ENCODE measurements at regions of chr14 and their contacts with region 1.

Region 1: GRCh38 chr14:20461274-20462001 is at the start of gene PIP4P1:
- DNase-seq: peak; percentile 95 to 100 (median 99)
- ATAC-seq: peak; percentile 92
- H3K4me3 ChIP-seq: peak within 1 kb of the TSS; percentile 83
- H3K4me3 Mint-ChIP-seq: peak within 1 kb of the TSS; percentile 81 to 97 (median 92)
- H3K27ac ChIP-seq: peak within 1 kb of the TSS; percentile 96
- H3K27ac Mint-ChIP-seq: peak within 1 kb of the TSS; percentile 88 to 99 (median 92)
- H3K4me1 ChIP-seq: peaks cover 20 to 21% of the 10 kb centered on the region in 2 donors
- H3K4me1 Mint-ChIP-seq: peaks cover 18 to 36% (median 32%) of the 10 kb centered on the region in 7 donors
- H3K27me3 ChIP-seq: no peaks in the 10 kb centered on the region
- H3K27me3 Mint-ChIP-seq: peaks cover 0 to 2% (median 0%) of the 10 kb centered on the region in 5 donors
- total RNA-seq, gene PIP4P1: 34.9 to 87.1 (median 74.2) TPM

Region 2: GRCh38 chr14:20440882-20441281 is 20.6 kb before region 1 on chr14:
- CTCF ChIA-PET with region 1: interaction called, 3 read pairs
- POLR2A ChIA-PET with region 1: interaction called, 10 read pairs
- intact Hi-C with region 1: no loop called
- DNase-seq: peak in 7 of 9 donors; percentile 32 to 71 (median 56)
- ATAC-seq: peak; percentile 99
- H3K4me3 ChIP-seq: no peak overlapping the region
- H3K4me3 Mint-ChIP-seq: peak overlapping the region; percentile 49 to 75 (median 62)
- H3K27ac ChIP-seq: peak overlapping the region; percentile 26
- H3K27ac Mint-ChIP-seq: peak overlapping the region; percentile 60 to 95 (median 86)
- H3K4me1 ChIP-seq: peaks cover 13 to 16% of the 10 kb centered on the region in 2 donors
- H3K4me1 Mint-ChIP-seq: peaks cover 18 to 35% (median 23%) of the 10 kb centered on the region in 7 donors
- H3K27me3 ChIP-seq: no peaks in the 10 kb centered on the region
- H3K27me3 Mint-ChIP-seq: no peaks in the 10 kb centered on the region

Region 3: DNA sequence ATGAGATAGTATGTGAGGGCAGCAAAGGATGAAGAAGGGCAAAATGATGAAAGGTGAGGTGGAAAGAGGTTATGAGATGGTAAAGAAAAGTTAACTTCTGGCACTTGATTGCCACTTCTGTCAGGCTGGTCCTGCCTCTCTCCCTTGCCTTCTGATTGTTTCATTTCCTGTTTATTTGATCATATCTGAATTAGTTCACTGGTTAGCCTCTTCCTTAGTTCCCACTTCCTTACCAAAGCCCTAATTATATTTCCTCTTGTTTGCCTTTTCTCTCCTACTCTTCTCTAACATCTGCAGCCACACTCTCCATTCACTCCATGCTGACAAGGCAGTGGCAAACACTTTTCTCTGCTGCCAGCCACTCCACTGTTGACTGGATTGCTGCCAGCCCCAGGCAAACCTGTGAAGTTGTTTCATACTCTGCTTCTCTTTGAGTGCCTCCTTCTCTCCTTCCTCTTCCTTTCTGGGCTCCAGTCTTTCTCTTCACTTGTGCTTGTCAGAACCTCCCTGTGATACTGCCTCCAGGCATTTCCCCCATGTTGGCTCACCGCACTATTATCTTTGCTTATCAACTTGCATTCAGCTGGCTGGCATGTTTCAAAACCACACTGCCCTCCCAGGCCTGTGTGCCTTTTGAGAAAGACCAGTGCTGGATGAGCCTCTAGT is 15.9 kb after region 1 on chr14:
- CTCF ChIA-PET with region 1: interaction called, 3 read pairs
- POLR2A ChIA-PET with region 1: interaction called, 35 read pairs
- intact Hi-C with region 1: loop called in 1 of 2 experiments (anchors 1 kb)
- DNase-seq: peak in 7 of 9 donors; percentile 30 to 68 (median 56)
- ATAC-seq: peak; percentile 69
- H3K4me3 ChIP-seq: peak overlapping the region; percentile 22
- H3K4me3 Mint-ChIP-seq: peak overlapping the region; percentile 68 to 86 (median 77)
- H3K27ac ChIP-seq: peak overlapping the region; percentile 68
- H3K27ac Mint-ChIP-seq: peak overlapping the region; percentile 83 to 96 (median 89)
- H3K4me1 ChIP-seq: peaks cover 46 to 57% of the 10 kb centered on the region in 2 donors
- H3K4me1 Mint-ChIP-seq: peaks cover 51 to 98% (median 85%) of the 10 kb centered on the region in 7 donors
- H3K27me3 ChIP-seq: no peaks in the 10 kb centered on the region
- H3K27me3 Mint-ChIP-seq: no peaks in the 10 kb centered on the region

Region 4: DNA sequence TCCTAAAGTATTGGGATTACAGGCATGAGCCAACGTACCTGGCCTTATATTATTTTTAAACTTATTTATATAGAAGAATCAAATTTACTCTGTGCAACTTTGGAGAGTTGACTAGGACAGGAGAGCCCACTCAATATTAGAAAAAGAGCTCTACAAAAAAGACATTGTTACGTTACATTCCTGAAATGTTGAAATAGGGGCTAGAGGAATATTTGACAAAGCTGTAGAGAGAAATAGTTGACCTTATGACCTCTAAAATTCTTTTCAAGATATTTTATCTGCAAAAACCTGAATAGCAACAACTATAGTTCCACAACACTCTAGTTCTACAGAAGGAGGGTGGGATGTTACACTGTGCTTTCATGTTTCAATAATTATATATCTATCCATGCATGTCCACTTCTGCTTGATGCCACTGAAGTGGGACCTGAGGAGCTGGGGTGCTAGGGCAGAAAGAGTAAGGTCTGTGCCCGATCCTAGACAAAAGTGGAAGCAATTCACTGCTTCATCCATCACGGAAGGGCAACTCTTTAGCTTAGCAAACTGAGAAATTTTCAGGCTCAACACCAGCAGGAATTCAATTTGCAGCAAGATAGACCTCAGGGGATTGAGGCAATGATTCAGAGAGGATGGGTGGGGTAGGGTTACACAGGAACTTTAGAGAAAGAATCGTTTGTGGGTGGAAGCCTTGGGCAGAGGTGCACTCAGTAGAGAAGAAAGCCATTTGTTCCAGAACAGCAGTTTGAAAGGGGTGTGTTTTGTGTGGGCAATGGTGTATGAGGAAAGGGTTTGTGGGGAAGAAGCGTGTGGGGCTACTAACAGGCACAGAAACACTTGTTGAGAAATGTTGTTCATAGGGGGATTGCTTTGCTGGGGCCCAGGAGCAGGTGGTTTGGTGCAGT is 27.9 kb after region 1 on chr14:
- CTCF ChIA-PET with region 1: interaction called, 3 read pairs
- POLR2A ChIA-PET with region 1: interaction called, 17 read pairs
- intact Hi-C with region 1: no loop called
- DNase-seq: peak in 5 of 9 donors; percentile 14 to 40 (median 35)
- ATAC-seq: peak; percentile 70
- H3K4me3 ChIP-seq: peak overlapping the region; percentile 35
- H3K4me3 Mint-ChIP-seq: peak overlapping the region; percentile 67 to 93 (median 76)
- H3K27ac ChIP-seq: peak overlapping the region; percentile 46
- H3K27ac Mint-ChIP-seq: peak overlapping the region; percentile 65 to 95 (median 86)
- H3K4me1 ChIP-seq: peaks cover 37 to 51% of the 10 kb centered on the region in 2 donors
- H3K4me1 Mint-ChIP-seq: peaks cover 47 to 89% (median 79%) of the 10 kb centered on the region in 7 donors
- H3K27me3 ChIP-seq: no peaks in the 10 kb centered on the region
- H3K27me3 Mint-ChIP-seq: no peaks in the 10 kb centered on the region

Region 5: GRCh38 chr14:20499108-20499507 is 37.7 kb after region 1 on chr14:
- CTCF ChIA-PET with region 1: interaction called, 3 read pairs
- POLR2A ChIA-PET with region 1: interaction called, 10 read pairs
- intact Hi-C with region 1: no loop called
- DNase-seq: no peak
- ATAC-seq: no peak
- H3K4me3 ChIP-seq: no peak overlapping the region
- H3K4me3 Mint-ChIP-seq: no peak overlapping the region
- H3K27ac ChIP-seq: no peak overlapping the region
- H3K27ac Mint-ChIP-seq: no peak overlapping the region
- H3K4me1 ChIP-seq: no peaks in the 10 kb centered on the region
- H3K4me1 Mint-ChIP-seq: peaks cover 11 to 35% (median 20%) of the 10 kb centered on the region in 7 donors
- H3K27me3 ChIP-seq: no peaks in the 10 kb centered on the region
- H3K27me3 Mint-ChIP-seq: peaks cover 0 to 8% (median 0%) of the 10 kb centered on the region in 5 donors

Region 6: GRCh38 chr14:20601482-20602080 is 140.1 kb after region 1 on chr14:
- CTCF ChIA-PET with region 1: no interaction called
- POLR2A ChIA-PET with region 1: no interaction called
- intact Hi-C with region 1: no loop called
- DNase-seq: no peak
- ATAC-seq: no peak
- H3K4me3 ChIP-seq: no peak overlapping the region
- H3K4me3 Mint-ChIP-seq: no peak overlapping the region
- H3K27ac ChIP-seq: no peak overlapping the region
- H3K27ac Mint-ChIP-seq: no peak overlapping the region
- H3K4me1 ChIP-seq: no peaks in the 10 kb centered on the region
- H3K4me1 Mint-ChIP-seq: no peaks in the 10 kb centered on the region
- H3K27me3 ChIP-seq: no peaks in the 10 kb centered on the region
- H3K27me3 Mint-ChIP-seq: no peaks in the 10 kb centered on the region

Measured in naive thymus-derived CD4-positive, alpha-beta T cell (primary cell).